ENCODE measurements at regions of chr3 and their contacts with region 1.

Region 1: GRCh38 chr3:66822186-66823008 is 175.7 kb upstream of the KBTBD8 start:
- DNase-seq: peak; percentile 74
- H3K4me3 ChIP-seq: no peak overlapping the region
- H3K27ac ChIP-seq: no peak overlapping the region
- H3K4me1 ChIP-seq: no peaks in the 10 kb centered on the region
- H3K27me3 ChIP-seq: peaks cover 14 to 16% of the 10 kb centered on the region in 2 experiments
- CTCF ChIP-seq: peak; percentile 74 to 83
- POLR2A ChIP-seq: no peak

Region 2: GRCh38 chr3:66270701-66271100 is 551.7 kb before region 1 on chr3:
- CTCF ChIA-PET with region 1: interaction called, 30 read pairs
- POLR2A ChIA-PET with region 1: no interaction called
- dilution Hi-C with region 1: no loop called
- intact Hi-C with region 1: no loop called
- DNase-seq: no peak
- H3K4me3 ChIP-seq: no peak overlapping the region
- H3K27ac ChIP-seq: no peak overlapping the region
- H3K4me1 ChIP-seq: no peaks in the 10 kb centered on the region
- H3K27me3 ChIP-seq: no peaks in the 10 kb centered on the region
- CTCF ChIP-seq: no peak
- POLR2A ChIP-seq: no peak

Region 3: GRCh38 chr3:66693461-66694031 is 128.9 kb before region 1 on chr3:
- CTCF ChIA-PET with region 1: no interaction called
- POLR2A ChIA-PET with region 1: no interaction called
- dilution Hi-C with region 1: no loop called
- intact Hi-C with region 1: no loop called
- DNase-seq: no peak
- H3K4me3 ChIP-seq: no peak overlapping the region
- H3K27ac ChIP-seq: no peak overlapping the region
- H3K4me1 ChIP-seq: no peaks in the 10 kb centered on the region
- H3K27me3 ChIP-seq: peaks cover 0 to 2% of the 10 kb centered on the region in 2 experiments
- CTCF ChIP-seq: no peak
- POLR2A ChIP-seq: no peak

Region 4: DNA sequence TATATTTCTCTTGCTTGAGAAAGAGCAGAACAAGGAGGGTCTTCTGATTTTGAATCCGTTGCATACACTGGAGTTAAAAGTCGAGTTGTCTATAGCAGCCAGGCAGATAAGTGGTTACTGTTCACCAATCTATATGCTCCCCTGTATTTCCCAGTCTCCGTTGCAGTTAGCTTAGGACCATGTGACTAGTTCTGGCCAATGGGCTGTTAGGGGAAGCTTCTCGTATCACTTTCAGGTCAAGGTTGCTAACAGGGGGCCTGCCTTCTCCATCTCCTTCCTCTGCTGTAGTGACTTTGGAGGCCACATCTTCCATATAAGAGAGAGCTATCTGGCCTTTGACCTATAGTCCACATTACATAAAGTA is 12.8 kb before region 1 on chr3:
- CTCF ChIA-PET with region 1: interaction called, 15 read pairs
- POLR2A ChIA-PET with region 1: no interaction called
- dilution Hi-C with region 1: no loop called
- intact Hi-C with region 1: no loop called
- DNase-seq: peak; percentile 10
- H3K4me3 ChIP-seq: no peak overlapping the region
- H3K27ac ChIP-seq: no peak overlapping the region
- H3K4me1 ChIP-seq: no peaks in the 10 kb centered on the region
- H3K27me3 ChIP-seq: no peaks in the 10 kb centered on the region
- CTCF ChIP-seq: no peak
- POLR2A ChIP-seq: no peak

Measured in endothelial cell of umbilical vein (primary cell).